ENCODE measurements at regions of chr9 and their contacts with region 1.

Region 1: DNA sequence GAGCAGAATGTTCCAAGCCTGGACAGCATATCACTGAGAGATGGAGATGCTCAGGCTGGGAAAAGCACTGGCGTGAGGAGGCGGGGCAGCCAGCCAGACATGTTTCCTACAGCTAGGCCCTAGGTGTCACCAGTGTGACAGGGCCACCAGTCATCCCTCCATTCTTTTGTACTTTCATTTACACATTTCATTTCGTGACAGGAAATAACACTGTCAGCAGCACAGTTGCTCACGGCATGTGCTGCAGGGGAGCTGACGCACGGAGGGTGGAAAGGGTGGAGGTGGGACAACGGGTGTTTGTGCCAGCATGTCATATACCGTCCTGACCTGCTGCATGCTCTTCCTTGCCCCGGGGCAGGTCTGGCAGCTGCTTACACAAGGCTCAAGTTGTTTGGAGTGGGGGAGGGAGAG is 14.8 kb upstream of the CEMIP2 start:
- DNase-seq: peak; percentile 90
- ATAC-seq: peak; percentile 96
- H3K4me3 Mint-ChIP-seq: peak overlapping the region; percentile 67
- H3K27ac Mint-ChIP-seq: peak overlapping the region; percentile 99
- H3K4me1 Mint-ChIP-seq: peaks cover 53% of the 10 kb centered on the region
- H3K27me3 Mint-ChIP-seq: no peaks in the 10 kb centered on the region

Region 2: GRCh38 chr9:71795097-71795813 is 12.1 kb after region 1 on chr9:
- CTCF ChIA-PET with region 1: interaction called, 28 read pairs
- POLR2A ChIA-PET with region 1: interaction called, 44 read pairs
- DNase-seq: peak; percentile 35
- ATAC-seq: peak; percentile 71
- H3K4me3 Mint-ChIP-seq: peak overlapping the region; percentile 60
- H3K27ac Mint-ChIP-seq: peak overlapping the region; percentile 99
- H3K4me1 Mint-ChIP-seq: peaks cover 42% of the 10 kb centered on the region
- H3K27me3 Mint-ChIP-seq: no peaks in the 10 kb centered on the region

Region 3: DNA sequence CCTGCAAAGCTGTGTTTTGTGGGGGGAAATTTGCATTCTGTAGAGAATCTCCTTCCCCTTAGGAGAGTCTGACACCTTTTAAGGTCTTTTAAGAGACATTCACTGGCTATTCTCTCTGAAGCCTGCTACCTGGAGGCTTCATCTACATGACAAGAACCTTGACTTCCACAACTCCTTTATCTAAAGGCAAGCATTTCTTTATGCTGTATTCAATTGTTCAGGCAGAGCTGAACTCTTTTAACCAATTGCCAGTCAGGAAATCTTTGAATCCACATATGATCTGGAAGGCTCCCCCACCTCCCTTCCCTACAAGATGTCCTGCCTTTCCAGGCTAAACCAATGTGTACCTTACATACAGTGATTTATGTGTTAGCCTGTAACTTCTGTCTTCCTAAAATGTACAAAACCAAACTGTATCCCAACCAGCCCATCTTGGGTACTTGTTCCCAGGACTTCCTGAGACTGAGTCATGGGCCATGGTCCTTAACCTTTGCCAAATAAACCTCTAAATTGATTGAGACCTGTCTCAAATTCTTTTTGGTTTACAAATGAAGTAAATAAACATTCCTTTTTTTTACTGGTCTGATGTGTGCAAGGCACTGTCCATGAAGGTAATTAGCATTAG is 138.2 kb after region 1 on chr9:
- CTCF ChIA-PET with region 1: no interaction called
- POLR2A ChIA-PET with region 1: no interaction called
- DNase-seq: no peak
- ATAC-seq: no peak
- H3K4me3 Mint-ChIP-seq: no peak overlapping the region
- H3K27ac Mint-ChIP-seq: no peak overlapping the region
- H3K4me1 Mint-ChIP-seq: peaks cover 10% of the 10 kb centered on the region
- H3K27me3 Mint-ChIP-seq: no peaks in the 10 kb centered on the region

Region 4: DNA sequence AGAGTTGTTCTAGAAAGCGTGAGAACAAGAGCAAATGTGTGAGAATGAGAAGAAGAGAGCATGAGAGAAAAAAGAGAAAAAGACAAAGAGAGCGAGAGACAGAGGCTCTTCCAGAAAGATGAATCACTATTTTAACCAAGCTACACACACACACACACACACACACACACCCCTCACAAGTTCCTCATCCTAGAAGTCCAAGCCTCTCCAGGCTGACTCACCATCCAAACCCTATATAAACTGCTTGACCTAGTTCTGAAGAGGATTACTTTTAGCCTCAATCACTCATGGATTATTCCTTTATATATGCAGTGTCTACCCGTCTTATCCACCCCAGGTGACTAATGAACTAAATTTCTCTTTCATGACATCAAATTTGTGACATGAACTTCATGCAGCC is 239.7 kb after region 1 on chr9:
- CTCF ChIA-PET with region 1: interaction called, 10 read pairs
- POLR2A ChIA-PET with region 1: no interaction called
- DNase-seq: no peak
- ATAC-seq: no peak
- H3K4me3 Mint-ChIP-seq: no peak overlapping the region
- H3K27ac Mint-ChIP-seq: no peak overlapping the region
- H3K4me1 Mint-ChIP-seq: peaks cover 7% of the 10 kb centered on the region
- H3K27me3 Mint-ChIP-seq: no peaks in the 10 kb centered on the region

Measured in activated CD8-positive, alpha-beta T cell treated with anti-CD3 and anti-CD28 coated beads, Interleukin-2, amount 10 ng/mL, durations not matched to agents 7 days and 5 days (primary cell).